ENCODE measurements at regions of chr9 and their contacts with region 1.

Region 1: GRCh38 chr9:135309763-135310125 is 169.8 kb upstream of the PPP1R26 start:
- DNase-seq: no peak
- ATAC-seq: no peak
- H3K4me3 ChIP-seq: no peak overlapping the region
- H3K27ac ChIP-seq: no peak overlapping the region
- H3K4me1 ChIP-seq: peaks cover 0 to 4% of the 10 kb centered on the region in 2 donors
- H3K27me3 ChIP-seq: peaks cover 13 to 45% (median 32%) of the 10 kb centered on the region in 3 donors
- CTCF ChIP-seq: no peak
- POLR2A ChIP-seq: no peak

Region 2: DNA sequence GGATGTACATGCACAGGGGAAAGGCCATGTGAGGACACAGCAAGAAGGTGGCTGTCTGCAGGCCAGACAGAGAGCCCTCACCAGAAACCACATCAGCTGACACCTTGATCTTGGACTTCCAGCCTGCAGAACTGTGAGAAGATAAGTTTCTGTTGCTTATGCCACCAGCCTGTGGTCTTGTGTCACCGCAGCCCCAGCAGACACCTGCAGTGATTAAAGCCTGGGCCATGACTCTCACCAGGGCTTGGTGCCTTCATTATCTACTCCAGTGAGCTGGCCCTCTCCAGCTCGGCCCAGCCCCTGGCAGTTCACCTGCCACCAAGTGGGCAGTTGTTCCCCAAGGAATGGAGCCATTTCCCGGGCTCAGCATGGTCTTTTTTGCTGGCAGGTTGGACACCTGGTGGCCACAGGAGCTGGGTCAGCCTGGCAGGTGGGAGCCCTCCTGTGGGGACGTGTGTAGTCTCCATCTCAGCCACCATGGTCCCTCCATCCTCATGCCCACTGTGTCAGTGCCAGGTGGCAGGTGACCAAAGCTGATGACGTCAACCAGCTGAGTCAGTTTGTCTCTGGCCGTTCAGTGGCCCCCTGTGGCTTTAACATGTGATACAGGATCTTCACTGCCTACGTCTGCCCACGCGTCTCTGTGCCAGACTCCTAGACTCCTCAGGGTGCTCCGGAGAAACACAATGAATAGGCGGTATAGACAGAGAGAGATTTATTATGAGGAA is 70.0 kb after region 1 on chr9:
- in situ Hi-C with region 1: loop called in 1 of 4 experiments (anchors 10 kb)
- intact Hi-C with region 1: no loop called
- DNase-seq: no peak
- ATAC-seq: no peak
- H3K4me3 ChIP-seq: no peak overlapping the region
- H3K27ac ChIP-seq: no peak overlapping the region
- H3K4me1 ChIP-seq: no peaks in the 10 kb centered on the region
- H3K27me3 ChIP-seq: peaks cover 0 to 16% (median 0%) of the 10 kb centered on the region in 3 donors
- CTCF ChIP-seq: no peak
- POLR2A ChIP-seq: no peak

Measured in gastrocnemius medialis (tissue), 4 donors.